ENCODE measurements at regions of chr4 and their contacts with region 1.

Region 1: DNA sequence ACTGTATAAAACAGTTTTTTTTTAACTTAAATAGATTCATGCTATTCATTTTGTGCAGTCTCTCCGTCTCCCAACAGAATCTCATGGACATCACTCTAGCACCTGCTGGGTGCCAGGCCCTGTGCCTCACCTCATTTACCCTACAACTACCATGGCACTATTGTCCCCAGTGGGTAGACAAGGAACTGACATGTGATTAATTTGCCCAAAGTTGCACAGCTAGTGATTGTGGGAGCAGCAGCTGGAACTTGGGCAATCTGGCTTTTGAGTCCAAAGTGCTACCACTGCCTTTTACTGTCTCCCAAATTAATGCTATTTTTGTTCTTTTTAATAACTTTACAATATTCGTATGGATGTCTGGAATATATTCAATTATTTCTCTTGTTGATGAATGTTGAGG is 11.2 kb upstream of the PGRMC2 start:
- DNase-seq: no peak
- H3K4me3 ChIP-seq: no peak overlapping the region
- H3K27ac ChIP-seq: no peak overlapping the region
- H3K4me1 ChIP-seq: no peaks in the 10 kb centered on the region
- H3K27me3 ChIP-seq: no peaks in the 10 kb centered on the region
- CTCF ChIP-seq: no peak

Region 2: GRCh38 chr4:128553686-128554515 is 255.0 kb after region 1 on chr4:
- intact Hi-C with region 1: loop called (anchors 5 kb)
- DNase-seq: no peak
- H3K4me3 ChIP-seq: peak overlapping the region; percentile 62
- H3K27ac ChIP-seq: peak overlapping the region; percentile 92
- H3K4me1 ChIP-seq: peaks cover 6% of the 10 kb centered on the region
- H3K27me3 ChIP-seq: no peaks in the 10 kb centered on the region
- CTCF ChIP-seq: no peak